HAP-1 (cell line): ENCODE measurements at regions of chrX and their contacts with region 1.

Region 1: DNA sequence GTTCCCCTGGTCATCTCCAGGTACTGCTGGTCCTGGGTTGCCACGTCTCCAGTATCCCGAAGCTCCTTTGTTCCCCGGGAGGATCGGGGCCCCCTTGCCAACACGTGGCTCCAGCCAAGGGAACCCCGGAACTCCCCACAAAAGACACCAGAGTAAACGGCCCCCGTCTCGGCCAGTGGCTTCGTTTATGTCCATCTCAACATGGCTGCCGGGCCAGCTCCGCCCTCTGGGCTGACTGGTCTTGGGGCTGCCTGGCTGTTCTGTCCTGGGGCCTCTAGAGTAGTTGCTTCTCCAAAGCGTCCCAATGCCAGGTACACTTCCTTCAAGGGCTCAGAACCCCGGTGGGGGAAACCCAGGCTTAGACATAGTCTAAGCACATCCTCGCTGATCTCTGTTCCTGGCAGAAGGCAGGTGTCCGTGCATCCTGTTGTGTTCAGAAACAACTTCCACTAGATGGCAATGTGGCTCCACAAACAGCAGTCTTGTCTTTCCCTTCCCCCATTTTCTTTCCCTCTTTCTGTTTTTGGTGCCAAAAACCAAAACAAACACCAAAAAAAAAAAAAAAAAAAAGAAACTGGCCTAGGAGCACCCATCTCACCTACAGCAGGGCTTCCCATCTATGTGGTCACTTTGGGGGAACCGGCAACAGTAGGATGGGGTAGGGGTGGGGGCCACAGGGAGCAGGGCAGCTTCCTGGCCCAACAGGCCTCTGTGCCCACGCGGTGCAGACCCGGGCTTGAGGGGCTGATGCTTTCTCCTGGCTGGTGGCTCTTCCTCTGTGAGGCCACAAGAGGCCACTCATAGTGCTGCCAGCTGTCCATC is 35.3 kb downstream of the NBDY start:
- DNase-seq: peak; percentile 44 to 66
- H3K4me3 ChIP-seq: no peak overlapping the region
- H3K4me1 ChIP-seq: no peaks in the 10 kb centered on the region
- H3K27me3 ChIP-seq: no peaks in the 10 kb centered on the region

Region 2: DNA sequence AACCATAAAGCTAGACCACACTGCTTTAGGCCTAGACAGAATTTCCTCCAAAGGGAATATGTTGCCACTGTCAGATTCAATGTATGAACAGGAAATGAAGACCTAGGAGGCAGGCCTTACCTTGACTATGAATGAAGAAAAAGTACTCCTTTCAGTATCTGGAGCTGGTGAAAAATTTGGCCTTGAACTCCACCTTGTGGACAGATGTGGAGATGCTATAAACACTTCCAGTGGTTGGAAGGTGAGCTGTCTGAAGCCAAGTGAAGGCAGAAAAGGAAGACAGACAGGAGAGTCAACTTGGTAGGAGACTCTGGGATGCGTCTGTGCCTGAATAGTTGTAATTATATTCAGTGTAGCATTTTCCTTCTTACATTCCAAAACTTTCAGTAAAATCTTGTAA is 213.8 kb after region 1 on chrX:
- in situ Hi-C with region 1: loop called (anchors 25 kb)
- DNase-seq: peak; percentile 49 to 50
- H3K4me3 ChIP-seq: no peak overlapping the region
- H3K4me1 ChIP-seq: no peaks in the 10 kb centered on the region
- H3K27me3 ChIP-seq: no peaks in the 10 kb centered on the region